ENCODE measurements at regions of chr1 and their contacts with region 1.

Region 1: GRCh38 chr1:67874501-67875111 is 41.3 kb upstream of the GNG12 start:
- DNase-seq: no peak
- ATAC-seq: no peak
- H3K4me3 ChIP-seq: no peak overlapping the region
- H3K27ac ChIP-seq: no peak overlapping the region
- H3K4me1 ChIP-seq: no peaks in the 10 kb centered on the region
- H3K27me3 ChIP-seq: no peaks in the 10 kb centered on the region
- CTCF ChIP-seq: no peak
- EP300 ChIP-seq: no peak
- POLR2A ChIP-seq: no peak
- RAD21 ChIP-seq: no peak

Region 2: GRCh38 chr1:67886076-67886475 is 11.5 kb after region 1 on chr1:
- CTCF ChIA-PET with region 1: no interaction called
- POLR2A ChIA-PET with region 1: no interaction called
- RAD21 ChIA-PET with region 1: no interaction called
- SMC1A ChIA-PET with region 1: interaction called, 4 read pairs
- in situ Hi-C with region 1: no loop called
- intact Hi-C with region 1: loop called (anchors 2 kb)
- DNase-seq: no peak
- ATAC-seq: no peak
- H3K4me3 ChIP-seq: no peak overlapping the region
- H3K27ac ChIP-seq: no peak overlapping the region
- H3K4me1 ChIP-seq: no peaks in the 10 kb centered on the region
- H3K27me3 ChIP-seq: no peaks in the 10 kb centered on the region
- CTCF ChIP-seq: no peak
- EP300 ChIP-seq: no peak
- POLR2A ChIP-seq: no peak
- RAD21 ChIP-seq: no peak

Measured in GM12878 (cell line).